ENCODE measurements at regions of chr13 and their contacts with region 1.

Region 1: GRCh38 chr13:112606109-112607001 is 18.4 kb upstream of the TUBGCP3 start:
- DNase-seq: peak; percentile 93
- CTCF ChIP-seq: peak; percentile 94

Region 2: DNA sequence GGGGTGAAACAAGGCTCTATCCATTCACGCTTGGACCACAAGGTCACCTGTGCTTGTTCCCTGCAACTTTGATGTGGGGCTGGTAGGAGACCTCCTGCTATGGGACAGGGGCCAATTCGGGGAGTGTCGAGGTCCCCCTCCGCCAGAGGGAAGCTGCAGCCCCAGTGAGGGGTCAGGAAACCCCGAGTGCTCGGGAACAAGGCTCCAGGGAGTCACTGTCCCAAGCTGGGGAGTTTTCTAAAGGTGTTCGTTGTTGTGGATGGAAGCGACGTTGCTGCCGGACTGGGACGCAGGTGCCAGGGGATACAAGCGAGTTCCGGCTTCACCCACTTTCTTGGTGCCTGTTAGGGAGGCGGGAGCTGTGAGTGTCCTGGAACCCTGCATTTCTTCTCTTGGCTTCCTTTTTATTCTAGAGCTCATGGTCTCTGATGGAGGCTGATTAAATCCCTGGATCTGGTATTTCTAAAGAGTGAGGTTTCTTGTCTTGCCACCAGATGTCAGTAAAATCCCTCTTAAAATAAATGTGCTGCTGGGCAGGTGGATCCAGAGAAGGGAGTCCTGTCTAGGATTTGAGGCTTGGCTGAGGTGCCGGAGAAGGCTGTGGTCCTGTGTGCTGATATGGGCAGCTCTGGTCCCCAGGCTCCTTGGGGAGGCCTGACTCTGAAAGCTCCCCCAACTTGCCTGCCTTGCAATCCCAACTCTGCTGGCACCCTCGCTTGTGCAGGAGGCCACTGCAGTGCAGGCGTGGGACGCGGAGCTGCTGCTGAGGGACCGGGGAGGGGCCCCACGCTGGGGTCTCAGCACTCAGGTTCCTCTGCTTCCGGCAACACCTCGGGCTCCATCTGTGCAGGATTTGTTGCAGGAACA is 1132.0 kb before region 1 on chr13:
- in situ Hi-C with region 1: loop called (anchors 25 kb)
- DNase-seq: peak; percentile 71
- CTCF ChIP-seq: peak; percentile 37

Region 3: GRCh38 chr13:112466132-112467058 is 140.0 kb before region 1 on chr13:
- in situ Hi-C with region 1: no loop called
- DNase-seq: no peak
- CTCF ChIP-seq: no peak